Prostate gland (tissue), 2 donors: ENCODE measurements at regions of chr1 and their contacts with region 1.

Region 1: DNA sequence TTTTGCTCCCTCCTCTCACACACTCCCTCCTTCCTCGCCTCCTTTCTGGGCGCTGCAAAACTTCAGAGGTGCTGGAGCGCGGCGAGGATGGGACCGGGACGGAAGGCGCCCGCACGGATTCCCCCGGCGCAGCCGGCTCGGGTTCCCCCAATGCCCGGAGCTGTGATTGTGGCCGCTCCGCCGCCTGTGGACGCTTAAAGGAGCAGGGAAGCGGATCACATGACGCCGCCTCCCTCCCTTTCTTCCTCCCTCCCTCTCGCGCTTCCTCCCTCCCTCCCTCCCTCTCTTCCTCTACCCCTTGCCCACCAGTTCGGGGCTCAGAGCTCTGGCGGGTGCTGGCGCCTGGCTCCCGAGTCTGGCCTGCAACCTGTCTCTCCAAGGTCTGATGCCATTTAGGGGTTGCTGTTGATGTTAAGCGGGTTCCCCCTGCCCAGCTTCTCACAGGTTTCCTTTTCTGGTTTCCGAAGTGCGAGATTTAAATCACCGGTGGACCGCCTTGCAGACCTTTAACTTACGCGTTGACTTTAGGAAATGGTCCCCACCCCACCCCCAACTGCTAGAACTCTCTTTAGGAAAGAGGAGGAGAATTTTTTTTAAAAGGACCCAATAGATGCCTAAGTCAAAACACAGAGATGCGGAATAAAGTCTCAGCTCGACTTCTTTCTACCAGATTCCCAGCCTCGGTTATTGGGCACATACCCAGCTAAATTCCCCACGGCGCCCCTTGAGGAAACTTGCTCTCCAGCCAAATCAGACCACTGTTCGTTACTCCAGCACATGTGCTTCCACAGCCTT is at the start of gene WLS:
- DNase-seq: peak; percentile 87
- H3K4me3 ChIP-seq: peak within 1 kb of the TSS; percentile 58 to 81
- H3K27ac ChIP-seq: peak within 1 kb of the TSS; percentile 85 to 87
- H3K4me1 ChIP-seq: no peaks in the 10 kb centered on the region
- H3K27me3 ChIP-seq: no peaks in the 10 kb centered on the region
- CTCF ChIP-seq: peak in 2 of 4 experiments; percentile 18 to 59
- POLR2A ChIP-seq: peak; percentile 86
- total RNA-seq, gene WLS: 74.5 to 92.1 TPM

Region 2: GRCh38 chr1:68120136-68120791 is 112.3 kb before region 1 on chr1:
- intact Hi-C with region 1: loop called (anchors 5 kb)
- DNase-seq: peak; percentile 66
- H3K4me3 ChIP-seq: no peak overlapping the region
- H3K27ac ChIP-seq: peak overlapping the region in 1 of 2 donors; percentile 4
- H3K4me1 ChIP-seq: no peaks in the 10 kb centered on the region
- H3K27me3 ChIP-seq: no peaks in the 10 kb centered on the region
- CTCF ChIP-seq: peak; percentile 59 to 87 (median 81)
- POLR2A ChIP-seq: no peak

Region 3: GRCh38 chr1:68141071-68142021 is 91.2 kb before region 1 on chr1:
- intact Hi-C with region 1: loop called (anchors 5 kb)
- DNase-seq: no peak
- H3K4me3 ChIP-seq: no peak overlapping the region
- H3K27ac ChIP-seq: no peak overlapping the region
- H3K4me1 ChIP-seq: no peaks in the 10 kb centered on the region
- H3K27me3 ChIP-seq: no peaks in the 10 kb centered on the region
- CTCF ChIP-seq: no peak
- POLR2A ChIP-seq: no peak

Region 4: DNA sequence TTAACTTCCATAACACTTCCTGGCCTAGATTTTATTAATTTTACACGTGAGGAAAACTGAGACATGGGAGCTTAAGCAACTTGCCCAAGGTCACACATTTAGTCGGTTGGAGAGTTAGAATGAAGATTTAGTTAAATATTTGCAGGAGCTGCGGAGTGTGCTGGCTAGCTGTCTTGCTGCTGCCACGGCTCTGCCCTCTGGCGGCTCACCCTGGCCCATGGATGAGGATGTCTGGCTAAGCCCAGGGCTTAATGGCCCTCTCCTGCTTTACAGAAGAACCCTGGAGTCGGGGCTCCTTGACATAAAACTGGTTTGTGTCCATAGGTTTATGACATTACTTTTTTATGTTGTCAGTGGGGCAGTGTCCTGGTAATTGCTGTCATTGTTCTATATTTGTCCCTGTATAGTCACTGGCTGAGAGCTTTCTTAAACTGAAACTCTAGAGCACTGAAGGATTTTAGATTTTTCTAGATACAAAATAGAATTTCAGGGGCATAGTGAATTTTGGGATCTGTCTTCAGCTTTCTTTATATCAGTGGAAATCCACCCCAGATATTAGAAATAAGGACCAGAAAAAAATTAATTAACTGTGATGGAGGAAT is 88.6 kb after region 1 on chr1:
- intact Hi-C with region 1: loop called (anchors 5 kb)
- DNase-seq: peak; percentile 71
- H3K4me3 ChIP-seq: no peak overlapping the region
- H3K27ac ChIP-seq: no peak overlapping the region
- H3K4me1 ChIP-seq: no peaks in the 10 kb centered on the region
- H3K27me3 ChIP-seq: no peaks in the 10 kb centered on the region
- CTCF ChIP-seq: peak; percentile 40 to 77 (median 72)
- POLR2A ChIP-seq: no peak